ENCODE measurements at regions of chr15 and their contacts with region 1.

Region 1: DNA sequence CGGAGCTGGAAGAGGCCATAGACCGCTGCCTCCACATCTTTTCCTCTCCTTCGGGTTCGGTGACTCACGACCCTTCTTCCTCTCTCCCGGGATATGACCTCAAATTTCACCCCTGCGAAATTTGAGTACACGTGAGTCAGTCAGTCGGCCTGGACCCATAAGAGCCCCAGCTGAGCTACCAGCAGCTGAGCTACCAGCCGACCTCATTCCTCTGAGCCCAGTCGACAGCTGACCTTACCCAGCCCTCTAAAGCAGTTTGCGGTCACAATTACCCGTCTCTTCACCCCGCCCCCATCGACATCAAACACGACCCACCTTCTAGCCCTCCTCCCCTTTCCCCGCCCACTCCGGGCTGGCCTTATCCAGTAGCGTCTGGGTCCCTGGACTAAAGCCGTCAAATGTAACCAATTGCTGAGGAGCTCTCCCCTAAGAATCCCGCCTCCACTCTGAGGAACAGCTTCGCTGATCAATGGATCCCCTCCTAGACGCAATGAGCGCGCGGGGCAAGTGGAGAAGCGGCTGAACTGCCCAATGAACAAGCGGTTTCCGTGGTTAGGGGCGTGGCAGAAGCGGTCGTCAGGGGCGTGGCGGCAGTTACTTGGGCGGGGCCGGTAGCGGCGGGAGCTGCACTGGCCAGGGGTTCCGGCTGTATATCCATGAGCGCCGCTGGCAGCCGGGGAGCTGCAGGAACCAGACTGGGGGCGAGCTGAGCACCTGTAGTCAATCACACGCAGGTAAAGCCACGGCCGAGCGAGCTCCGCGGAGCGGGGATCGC is at the start of gene ABHD2:
- DNase-seq: peak; percentile 100
- H3K4me3 ChIP-seq: peak within 1 kb of the TSS; percentile 5 to 63 (median 36)
- H3K27ac ChIP-seq: peak within 1 kb of the TSS; percentile 71
- H3K4me1 ChIP-seq: peaks cover 42% of the 10 kb centered on the region
- H3K27me3 ChIP-seq: no peaks in the 10 kb centered on the region
- CTCF ChIP-seq: no peak
- POLR2A ChIP-seq: no peak
- total RNA-seq, gene ABHD2: 52.3 and 62.2 TPM in 2 replicates

Region 2: DNA sequence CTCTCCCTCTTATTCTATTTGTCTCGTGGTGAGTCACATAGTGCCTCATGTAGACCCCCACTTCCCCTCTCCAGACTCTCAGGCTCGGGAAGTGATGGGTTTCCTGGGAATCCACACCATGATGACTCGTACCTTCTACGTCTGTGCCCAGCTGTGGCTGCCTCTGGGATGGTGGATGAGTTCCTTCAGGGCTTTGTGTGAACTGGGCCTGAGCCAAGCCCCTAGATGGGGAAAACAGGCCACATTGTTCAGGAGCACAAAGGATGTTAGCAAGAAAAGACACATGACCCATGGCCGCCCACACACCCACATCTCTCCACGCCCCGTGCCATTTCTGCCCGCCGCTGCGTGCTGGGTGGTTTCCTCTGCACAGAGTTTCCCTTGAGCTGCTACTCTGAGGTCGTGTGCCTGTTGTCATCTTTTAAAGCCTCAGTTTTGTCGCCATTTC is 438.7 kb before region 1 on chr15:
- CTCF ChIA-PET with region 1: no interaction called
- POLR2A ChIA-PET with region 1: no interaction called
- dilution Hi-C with region 1: no loop called
- intact Hi-C with region 1: loop called (anchors 1 kb)
- DNase-seq: peak; percentile 95
- H3K4me3 ChIP-seq: no peak overlapping the region
- H3K27ac ChIP-seq: peak overlapping the region; percentile 99
- H3K4me1 ChIP-seq: peaks cover 35% of the 10 kb centered on the region
- H3K27me3 ChIP-seq: no peaks in the 10 kb centered on the region
- CTCF ChIP-seq: no peak
- POLR2A ChIP-seq: no peak

Region 3: DNA sequence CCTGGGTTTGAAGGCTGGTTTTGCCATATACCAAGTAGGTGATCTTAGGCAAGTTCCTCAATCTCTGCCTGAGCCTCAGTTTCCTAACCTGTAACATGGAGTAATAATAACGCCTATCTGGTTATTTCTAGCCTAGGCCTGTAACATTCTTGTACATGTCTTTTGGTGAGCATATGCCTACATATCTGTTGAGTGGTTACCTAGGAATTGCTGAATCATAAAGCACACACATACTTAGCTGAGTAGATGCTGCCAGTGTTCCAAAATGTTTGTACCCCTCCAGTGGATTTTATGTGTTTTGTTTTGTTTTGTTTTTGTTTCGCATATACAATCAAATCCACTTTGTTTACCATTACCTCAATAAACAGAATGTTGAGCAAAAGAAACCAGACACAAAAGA is 157.4 kb before region 1 on chr15:
- CTCF ChIA-PET with region 1: no interaction called
- POLR2A ChIA-PET with region 1: no interaction called
- dilution Hi-C with region 1: no loop called
- intact Hi-C with region 1: no loop called
- DNase-seq: no peak
- H3K4me3 ChIP-seq: no peak overlapping the region
- H3K27ac ChIP-seq: no peak overlapping the region
- H3K4me1 ChIP-seq: no peaks in the 10 kb centered on the region
- H3K27me3 ChIP-seq: peaks cover 0 to 2% of the 10 kb centered on the region in 2 experiments
- CTCF ChIP-seq: no peak
- POLR2A ChIP-seq: no peak

Region 4: DNA sequence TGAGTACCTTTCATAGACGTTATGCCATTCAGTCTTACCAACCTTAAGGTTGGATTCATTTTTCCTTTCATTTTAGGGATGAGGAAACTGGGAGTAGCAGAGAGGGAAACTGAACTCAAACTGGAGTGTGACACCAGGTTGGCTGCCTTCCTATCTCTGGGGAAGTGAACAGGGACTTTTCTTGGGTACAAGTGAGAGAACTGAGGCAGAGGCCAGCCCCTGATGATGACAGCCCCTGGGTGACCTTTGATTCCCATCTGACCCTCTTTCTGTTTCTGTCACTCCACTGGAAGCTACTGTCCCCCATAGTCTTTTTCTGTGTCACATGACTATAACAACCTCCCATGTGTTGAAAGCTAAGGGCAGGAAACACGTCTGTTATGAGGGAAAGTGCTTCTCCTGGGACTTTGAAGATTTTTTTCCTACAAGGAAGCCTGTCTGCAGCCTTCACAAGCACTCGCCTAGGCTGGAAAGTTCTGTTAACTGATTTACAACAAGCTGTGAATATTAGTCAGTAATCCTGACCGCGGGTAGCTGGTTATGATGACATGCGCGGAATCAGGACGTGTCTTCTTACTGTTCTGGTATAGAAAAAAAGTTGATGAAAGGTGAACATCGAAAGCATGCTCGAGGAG is 31.6 kb after region 1 on chr15:
- CTCF ChIA-PET with region 1: interaction called, 10 read pairs
- POLR2A ChIA-PET with region 1: interaction called, 3 read pairs
- dilution Hi-C with region 1: no loop called
- intact Hi-C with region 1: loop called (anchors 1 kb)
- DNase-seq: peak; percentile 85
- H3K4me3 ChIP-seq: no peak overlapping the region
- H3K27ac ChIP-seq: peak overlapping the region; percentile 85
- H3K4me1 ChIP-seq: peaks cover 35% of the 10 kb centered on the region
- H3K27me3 ChIP-seq: no peaks in the 10 kb centered on the region
- CTCF ChIP-seq: no peak
- POLR2A ChIP-seq: no peak

Region 5: DNA sequence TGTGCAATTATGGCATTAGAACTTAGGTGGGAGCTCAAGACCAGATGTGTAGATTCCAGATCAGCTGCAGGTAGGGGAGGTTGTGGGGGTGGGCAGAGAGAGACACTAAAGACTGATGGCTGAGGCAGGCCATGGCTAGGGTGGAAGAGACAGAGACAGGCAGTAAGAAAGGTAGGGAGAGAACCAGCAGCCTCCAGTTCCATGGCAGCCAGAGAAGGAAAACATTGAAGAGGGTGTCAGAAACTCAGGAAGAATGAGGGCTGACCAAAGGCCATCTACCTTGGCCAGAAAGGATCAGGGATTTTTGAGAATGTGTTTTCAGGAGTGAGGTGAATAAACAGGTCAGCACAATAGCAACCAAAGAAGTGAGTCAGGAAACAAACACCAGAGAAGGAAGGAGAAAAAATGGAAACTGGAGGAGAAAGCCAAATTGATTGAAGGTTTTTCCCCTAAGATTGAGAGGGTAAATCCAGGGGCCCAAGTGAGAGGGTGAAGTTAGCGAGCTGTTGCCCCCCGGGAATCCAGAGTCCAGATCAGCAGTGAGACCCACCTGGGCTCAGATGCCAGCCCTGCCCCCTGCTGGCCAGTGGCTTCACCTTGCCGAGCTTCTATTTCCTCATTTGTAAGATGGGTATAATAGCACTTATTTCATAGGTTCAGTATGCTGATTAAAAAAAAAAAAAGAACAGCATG is 41.3 kb after region 1 on chr15:
- CTCF ChIA-PET with region 1: interaction called, 73 read pairs
- POLR2A ChIA-PET with region 1: interaction called, 6 read pairs
- dilution Hi-C with region 1: no loop called
- intact Hi-C with region 1: loop called (anchors 1 kb)
- DNase-seq: peak; percentile 62
- H3K4me3 ChIP-seq: no peak overlapping the region
- H3K27ac ChIP-seq: peak overlapping the region; percentile 52
- H3K4me1 ChIP-seq: peaks cover 41% of the 10 kb centered on the region
- H3K27me3 ChIP-seq: no peaks in the 10 kb centered on the region
- CTCF ChIP-seq: peak; percentile 67 to 78
- POLR2A ChIP-seq: no peak